Activated CD4-positive, alpha-beta memory T cell treated with anti-CD3 and anti-CD28 coated beads for 36 hours (primary cell): ENCODE measurements at regions of chr2 and their contacts with region 1.

Region 1: DNA sequence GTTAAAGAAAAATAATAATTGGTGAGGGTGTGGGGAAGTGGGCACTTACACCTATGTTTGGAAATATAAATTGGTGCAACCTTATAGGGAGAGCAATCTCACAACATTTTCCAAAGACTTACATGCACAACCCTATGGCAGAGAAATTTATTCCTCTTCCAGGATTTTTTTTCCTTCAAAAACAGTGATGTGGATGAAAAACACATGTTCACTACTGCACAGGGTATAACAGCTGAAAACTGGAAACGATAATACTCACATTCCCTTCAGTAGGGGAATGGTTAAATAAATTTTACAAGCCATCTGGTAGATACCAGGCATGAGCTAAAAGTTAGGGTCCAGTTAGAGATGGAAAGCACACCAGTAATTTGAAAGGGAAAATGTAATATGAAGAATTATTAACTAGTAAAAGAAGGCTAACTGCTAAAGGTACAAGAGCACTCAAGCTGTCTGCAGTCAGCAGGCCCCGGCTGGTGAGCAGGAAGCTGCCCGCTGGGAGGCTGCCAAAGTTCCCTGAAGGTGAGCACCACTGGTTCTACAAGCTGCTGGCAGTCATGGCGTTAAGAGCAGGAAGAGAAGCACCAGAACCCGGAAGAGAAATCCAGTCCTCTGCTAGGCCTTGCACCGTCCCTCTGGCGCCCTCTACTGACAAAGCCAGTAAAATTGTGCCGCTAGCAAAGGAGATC is 28.4 kb upstream of the CASP8 start:
- DNase-seq: peak; percentile 94
- H3K4me3 Mint-ChIP-seq: peak overlapping the region; percentile 49
- H3K27ac Mint-ChIP-seq: peak overlapping the region; percentile 98
- H3K4me1 Mint-ChIP-seq: peaks cover 42% of the 10 kb centered on the region
- H3K27me3 Mint-ChIP-seq: no peaks in the 10 kb centered on the region

Region 2: DNA sequence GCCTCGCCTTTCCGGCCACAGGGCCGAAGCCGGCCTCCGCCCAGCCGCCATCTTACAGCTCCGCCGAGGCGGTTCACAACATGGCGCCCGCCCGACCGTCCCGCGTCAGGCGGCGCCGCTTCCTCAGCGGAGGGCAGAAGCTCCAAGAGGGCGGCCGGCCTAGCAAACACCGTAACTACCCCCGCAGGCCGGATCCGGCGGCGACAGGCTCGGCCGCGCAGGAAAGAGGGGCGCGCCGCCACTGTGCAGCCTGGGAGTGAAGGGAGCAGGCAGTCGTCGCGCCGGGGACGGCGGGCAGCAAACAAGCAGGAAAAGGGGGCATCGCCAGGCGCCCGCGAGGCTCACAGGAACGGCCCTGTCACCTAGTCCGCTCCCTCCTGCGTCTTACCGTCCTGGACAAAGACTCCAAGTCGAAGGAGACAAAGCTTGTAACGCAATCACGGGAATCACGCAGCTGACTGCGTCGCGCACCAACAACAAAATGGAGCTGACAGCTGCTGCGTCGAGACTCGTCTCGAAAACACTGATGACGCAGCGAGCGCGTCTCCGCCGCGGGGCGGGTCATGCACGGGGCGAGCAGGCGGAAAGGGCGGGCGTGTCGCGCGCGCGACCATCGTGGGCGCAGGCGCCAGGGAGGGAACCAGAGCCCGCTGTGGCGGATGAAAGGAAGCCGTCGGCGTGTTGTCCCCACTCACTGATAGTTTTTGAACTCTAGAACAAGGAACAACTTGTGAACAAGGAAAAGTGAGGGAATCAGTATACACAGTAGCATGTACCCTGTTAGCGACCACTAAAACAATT is 367.5 kb before region 1 on chr2 and contains the start of gene CLK1:
- CTCF ChIA-PET with region 1: interaction called, 4 read pairs
- POLR2A ChIA-PET with region 1: interaction called, 15 read pairs
- intact Hi-C with region 1: no loop called
- DNase-seq: peak; percentile 98
- H3K4me3 Mint-ChIP-seq: peak within 1 kb of the TSS; percentile 87
- H3K27ac Mint-ChIP-seq: peak within 1 kb of the TSS; percentile 100
- H3K4me1 Mint-ChIP-seq: peaks cover 36% of the 10 kb centered on the region
- H3K27me3 Mint-ChIP-seq: no peaks in the 10 kb centered on the region
- total RNA-seq, gene CLK1: 112 to 114 TPM

Region 3: DNA sequence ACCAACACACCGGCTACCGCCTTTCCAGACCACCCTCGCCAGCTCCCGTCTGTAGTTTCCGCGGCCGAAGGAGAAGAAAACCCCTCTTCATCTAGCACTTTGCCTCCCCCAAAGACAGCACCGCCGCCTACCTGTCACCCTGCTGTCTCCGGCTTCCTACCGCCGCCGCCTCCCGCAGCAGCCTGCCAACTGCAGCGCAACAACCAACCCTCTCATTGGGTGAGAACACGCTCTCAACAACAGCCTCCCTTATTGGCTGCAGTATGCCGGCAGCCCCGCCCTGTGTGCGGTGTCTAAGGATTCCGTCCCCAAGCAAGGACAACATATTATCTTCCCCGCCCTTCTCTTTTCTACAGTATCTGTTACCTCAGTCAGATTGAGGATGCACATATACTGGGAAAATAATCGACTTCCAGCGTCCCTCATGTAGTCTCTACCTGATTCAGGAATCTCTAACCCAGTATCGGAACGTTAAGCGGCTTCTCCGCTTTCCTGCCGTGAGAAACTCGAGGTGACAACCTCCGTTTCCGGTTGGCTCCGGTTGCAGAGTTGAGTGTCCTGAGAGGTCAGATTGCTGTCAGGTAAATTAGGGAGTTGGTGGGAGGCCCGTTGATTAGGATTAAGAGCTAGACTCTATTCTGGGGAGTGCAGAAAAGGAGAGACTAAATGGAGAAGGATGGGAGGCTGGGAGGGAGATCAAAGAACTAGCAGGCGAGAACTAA is 160.3 kb before region 1 on chr2 and contains the starts of genes HYCC2 and NDUFB3:
- CTCF ChIA-PET with region 1: interaction called, 11 read pairs
- POLR2A ChIA-PET with region 1: no interaction called
- intact Hi-C with region 1: loop called (anchors 1 kb)
- DNase-seq: peak; percentile 95
- H3K4me3 Mint-ChIP-seq: peak within 1 kb of the TSS; percentile 91
- H3K27ac Mint-ChIP-seq: peak within 1 kb of the TSS; percentile 86
- H3K4me1 Mint-ChIP-seq: peaks cover 52% of the 10 kb centered on the region
- H3K27me3 Mint-ChIP-seq: no peaks in the 10 kb centered on the region
- total RNA-seq, gene HYCC2: 18.9 to 20.5 TPM
- total RNA-seq, gene NDUFB3: 158 to 162 TPM

Region 4: GRCh38 chr2:201151127-201151981 is 80.6 kb before region 1 on chr2:
- CTCF ChIA-PET with region 1: interaction called, 13 read pairs
- POLR2A ChIA-PET with region 1: no interaction called
- intact Hi-C with region 1: no loop called
- DNase-seq: no peak
- H3K4me3 Mint-ChIP-seq: peak overlapping the region; percentile 25
- H3K27ac Mint-ChIP-seq: peak overlapping the region; percentile 81
- H3K4me1 Mint-ChIP-seq: peaks cover 43% of the 10 kb centered on the region
- H3K27me3 Mint-ChIP-seq: no peaks in the 10 kb centered on the region

Region 5: GRCh38 chr2:201220102-201220570 is 11.8 kb before region 1 on chr2:
- CTCF ChIA-PET with region 1: interaction called, 32 read pairs
- POLR2A ChIA-PET with region 1: interaction called, 7 read pairs
- intact Hi-C with region 1: no loop called
- DNase-seq: no peak
- H3K4me3 Mint-ChIP-seq: no peak overlapping the region
- H3K27ac Mint-ChIP-seq: no peak overlapping the region
- H3K4me1 Mint-ChIP-seq: peaks cover 45% of the 10 kb centered on the region
- H3K27me3 Mint-ChIP-seq: no peaks in the 10 kb centered on the region

Region 6: GRCh38 chr2:201280191-201281040 is 48.5 kb after region 1 on chr2:
- CTCF ChIA-PET with region 1: interaction called, 19 read pairs
- POLR2A ChIA-PET with region 1: no interaction called
- intact Hi-C with region 1: no loop called
- DNase-seq: no peak
- H3K4me3 Mint-ChIP-seq: no peak overlapping the region
- H3K27ac Mint-ChIP-seq: peak overlapping the region; percentile 26
- H3K4me1 Mint-ChIP-seq: peaks cover 30% of the 10 kb centered on the region
- H3K27me3 Mint-ChIP-seq: no peaks in the 10 kb centered on the region

Region 7: GRCh38 chr2:201780674-201781581 is 549.0 kb after region 1 on chr2 and contains the start of gene ALS2:
- CTCF ChIA-PET with region 1: interaction called, 10 read pairs
- POLR2A ChIA-PET with region 1: no interaction called
- intact Hi-C with region 1: loop called (anchors 2 kb)
- DNase-seq: peak; percentile 96
- H3K4me3 Mint-ChIP-seq: peak within 1 kb of the TSS; percentile 98
- H3K27ac Mint-ChIP-seq: peak within 1 kb of the TSS; percentile 93
- H3K4me1 Mint-ChIP-seq: peaks cover 15% of the 10 kb centered on the region
- H3K27me3 Mint-ChIP-seq: peaks cover 3% of the 10 kb centered on the region
- total RNA-seq, gene ALS2: 11.0 to 12.6 TPM